Transverse colon (tissue), 4 donors: ENCODE measurements at regions of chr20 and their contacts with region 1.

Region 1: DNA sequence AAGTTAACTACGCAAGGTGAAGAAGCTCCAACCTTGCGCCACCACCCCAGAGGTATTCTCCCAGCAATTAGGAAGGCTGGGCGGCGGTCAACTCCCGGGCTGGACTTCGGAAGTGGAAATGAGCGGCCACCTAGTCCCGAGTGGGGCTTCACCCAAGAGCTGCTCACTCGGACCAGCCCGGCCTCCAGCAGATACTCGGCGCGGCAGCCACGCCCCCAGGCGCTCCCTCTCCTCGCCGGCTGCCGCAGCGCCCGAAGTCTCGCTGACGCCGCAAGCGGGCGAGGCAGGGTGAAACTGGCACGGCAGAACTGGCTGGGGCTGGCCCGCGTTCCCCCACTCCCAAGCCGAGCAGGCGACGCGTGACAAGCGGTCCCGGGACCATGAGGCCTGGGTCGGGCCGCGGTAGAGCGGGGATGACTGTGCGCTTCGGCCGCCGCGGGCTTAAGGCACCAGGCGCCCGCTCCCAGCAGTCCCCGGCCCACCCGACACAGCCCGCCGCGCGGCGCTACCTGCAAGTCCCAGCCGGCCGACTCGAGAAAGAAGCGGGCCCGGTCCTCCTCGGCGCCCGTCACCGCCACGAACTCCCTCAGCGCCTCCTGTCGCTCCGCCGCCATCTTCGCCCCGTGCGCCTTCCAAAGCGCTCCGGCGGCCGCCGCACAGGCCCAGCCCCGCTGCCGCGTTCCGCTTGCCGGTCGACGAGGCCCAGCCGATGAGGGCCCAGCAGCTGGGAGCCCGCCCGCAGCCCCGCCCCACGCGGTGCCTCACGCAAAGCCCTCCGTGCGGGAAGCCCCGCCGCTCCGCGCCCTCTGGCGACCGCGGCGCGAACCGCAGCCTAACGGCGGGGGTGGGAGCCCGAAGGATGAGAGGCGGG is at the start of gene NSFL1C:
- DNase-seq: peak; percentile 97
- H3K4me3 ChIP-seq: peak within 1 kb of the TSS; percentile 69 to 98 (median 88)
- H3K27ac ChIP-seq: peak within 1 kb of the TSS; percentile 89 to 95 (median 92)
- H3K4me1 ChIP-seq: peaks cover 11 to 61% (median 32%) of the 10 kb centered on the region in 4 donors
- H3K27me3 ChIP-seq: no peaks in the 10 kb centered on the region
- CTCF ChIP-seq: peak; percentile 66 to 99 (median 97)
- EP300 ChIP-seq: no peak
- POLR2A ChIP-seq: peak; percentile 56
- total RNA-seq, gene NSFL1C: 14.7 to 51.2 (median 48.8) TPM

Region 2: GRCh38 chr20:1130847-1131246 is 335.6 kb before region 1 on chr20:
- in situ Hi-C with region 1: loop called in 1 of 4 experiments (anchors 25 kb)
- intact Hi-C with region 1: no loop called
- DNase-seq: no peak
- H3K4me3 ChIP-seq: no peak overlapping the region
- H3K27ac ChIP-seq: no peak overlapping the region
- H3K4me1 ChIP-seq: no peaks in the 10 kb centered on the region
- H3K27me3 ChIP-seq: no peaks in the 10 kb centered on the region
- CTCF ChIP-seq: no peak
- EP300 ChIP-seq: no peak
- POLR2A ChIP-seq: no peak

Region 3: DNA sequence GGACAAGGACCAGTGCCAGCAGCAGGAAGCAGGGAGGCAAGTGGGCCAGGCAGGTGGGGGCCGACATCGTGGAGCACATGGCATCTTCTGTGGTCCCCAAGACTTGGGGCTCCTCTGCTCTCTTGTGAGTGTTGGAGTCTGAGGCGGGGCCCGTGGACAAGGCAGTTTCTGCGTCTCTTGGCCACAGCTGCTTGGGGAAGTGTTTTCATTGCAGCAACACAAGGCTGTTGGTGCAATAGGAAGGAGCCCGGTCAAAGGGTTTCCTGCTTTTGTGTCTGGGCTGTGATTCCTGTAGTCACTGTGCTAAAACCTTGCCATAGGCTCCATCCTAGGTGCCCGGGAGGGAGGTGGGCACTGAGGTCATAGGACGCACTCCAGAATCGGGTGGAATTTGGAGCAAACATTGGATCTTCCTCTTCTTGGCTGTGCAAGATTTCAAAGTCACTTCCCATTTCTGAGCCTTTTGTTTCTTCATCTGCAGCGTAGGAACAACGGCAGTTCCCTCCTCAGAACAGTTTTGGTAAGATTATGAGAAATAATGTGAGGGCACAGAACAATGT is 24.9 kb after region 1 on chr20 and contains the start of gene SIRPB2:
- in situ Hi-C with region 1: no loop called
- intact Hi-C with region 1: no loop called
- DNase-seq: peak; percentile 21
- H3K4me3 ChIP-seq: peak within 1 kb of the TSS in 1 of 4 donors; percentile 26
- H3K27ac ChIP-seq: peak within 1 kb of the TSS; percentile 48 to 67 (median 53)
- H3K4me1 ChIP-seq: peaks cover 0 to 3% (median 0%) of the 10 kb centered on the region in 4 donors
- H3K27me3 ChIP-seq: peaks cover 22% of the 10 kb centered on the region
- CTCF ChIP-seq: no peak
- EP300 ChIP-seq: no peak
- POLR2A ChIP-seq: no peak
- total RNA-seq, gene SIRPB2: 3.7 to 3.8 TPM in 2 of 4 donors, not detected in the others